ENCODE measurements at regions of chr6 and their contacts with region 1.

Region 1: GRCh38 chr6:39302669-39303424 is 11.4 kb downstream of the KCNK17 start:
- DNase-seq: peak; percentile 74 to 89 (median 83)
- ATAC-seq: peak; percentile 98
- H3K4me3 ChIP-seq: peak overlapping the region; percentile 26
- H3K4me3 Mint-ChIP-seq: peak overlapping the region; percentile 35
- H3K27ac ChIP-seq: no peak overlapping the region
- H3K27ac Mint-ChIP-seq: no peak overlapping the region
- H3K4me1 ChIP-seq: peaks cover 9% of the 10 kb centered on the region
- H3K4me1 Mint-ChIP-seq: peaks cover 4% of the 10 kb centered on the region
- H3K27me3 ChIP-seq: no peaks in the 10 kb centered on the region
- H3K27me3 Mint-ChIP-seq: no peaks in the 10 kb centered on the region
- CTCF ChIP-seq: peak; percentile 91

Region 2: GRCh38 chr6:38871741-38872568 is 430.9 kb before region 1 on chr6:
- CTCF ChIA-PET with region 1: interaction called, 4 read pairs
- POLR2A ChIA-PET with region 1: interaction called, 6 read pairs
- intact Hi-C with region 1: loop called (anchors 1 kb)
- DNase-seq: peak; percentile 20 to 74 (median 50)
- ATAC-seq: peak; percentile 53
- H3K4me3 ChIP-seq: no peak overlapping the region
- H3K4me3 Mint-ChIP-seq: no peak overlapping the region
- H3K27ac ChIP-seq: no peak overlapping the region
- H3K27ac Mint-ChIP-seq: no peak overlapping the region
- H3K4me1 ChIP-seq: peaks cover 14% of the 10 kb centered on the region
- H3K4me1 Mint-ChIP-seq: peaks cover 44% of the 10 kb centered on the region
- H3K27me3 ChIP-seq: no peaks in the 10 kb centered on the region
- H3K27me3 Mint-ChIP-seq: no peaks in the 10 kb centered on the region
- CTCF ChIP-seq: peak; percentile 86

Region 3: DNA sequence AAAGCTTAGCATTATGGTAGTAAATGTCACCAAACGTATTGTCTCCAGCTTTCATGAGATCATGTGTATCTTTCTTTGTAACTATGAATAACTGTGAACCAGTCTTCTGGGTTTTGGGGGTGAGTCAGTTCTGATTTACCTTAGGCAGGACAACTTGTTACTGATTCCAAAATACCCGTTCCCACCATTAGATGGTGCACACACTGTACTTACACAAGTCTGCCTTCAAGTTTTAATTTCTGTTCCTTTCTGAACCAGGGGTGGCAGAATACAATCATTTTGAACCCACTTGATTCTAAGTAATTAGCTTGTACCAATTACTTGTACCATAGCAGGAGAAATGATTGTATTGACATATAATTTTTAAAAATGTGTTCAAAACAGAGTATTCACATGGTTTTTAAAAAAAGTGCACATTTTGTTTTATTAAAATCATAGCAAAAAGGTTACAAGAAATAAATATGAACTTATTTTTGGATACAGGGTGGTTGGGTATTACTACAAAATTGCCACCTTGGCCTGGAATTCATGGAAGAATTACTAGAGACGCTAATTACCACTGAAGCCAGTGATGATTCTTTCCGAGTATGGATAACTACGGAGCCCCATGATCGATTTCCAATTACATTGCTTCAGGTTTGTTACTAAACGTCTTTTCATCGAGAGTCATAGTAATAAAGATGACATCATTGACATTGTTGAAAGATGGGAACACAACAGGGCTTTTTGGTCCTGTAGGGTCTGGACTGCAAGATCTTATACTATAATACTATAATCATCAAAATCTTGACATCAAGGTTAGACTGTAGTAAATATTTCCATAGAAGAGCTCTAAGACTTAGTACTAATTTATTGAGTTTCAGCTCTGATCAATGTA is 329.4 kb before region 1 on chr6:
- CTCF ChIA-PET with region 1: interaction called, 8 read pairs
- POLR2A ChIA-PET with region 1: no interaction called
- intact Hi-C with region 1: loop called (anchors 1 to 2 kb)
- DNase-seq: peak in 4 of 14 experiments; percentile 4 to 60 (median 49)
- ATAC-seq: peak; percentile 68
- H3K4me3 ChIP-seq: no peak overlapping the region
- H3K4me3 Mint-ChIP-seq: no peak overlapping the region
- H3K27ac ChIP-seq: no peak overlapping the region
- H3K27ac Mint-ChIP-seq: no peak overlapping the region
- H3K4me1 ChIP-seq: no peaks in the 10 kb centered on the region
- H3K4me1 Mint-ChIP-seq: no peaks in the 10 kb centered on the region
- H3K27me3 ChIP-seq: no peaks in the 10 kb centered on the region
- H3K27me3 Mint-ChIP-seq: peaks cover 27% of the 10 kb centered on the region
- CTCF ChIP-seq: peak; percentile 54

Region 4: GRCh38 chr6:38997128-38997761 is 305.6 kb before region 1 on chr6:
- CTCF ChIA-PET with region 1: interaction called, 5 read pairs
- POLR2A ChIA-PET with region 1: no interaction called
- intact Hi-C with region 1: loop called (anchors 2 to 5 kb)
- DNase-seq: peak in 11 of 14 experiments; percentile 4 to 41 (median 12)
- ATAC-seq: no peak
- H3K4me3 ChIP-seq: no peak overlapping the region
- H3K4me3 Mint-ChIP-seq: no peak overlapping the region
- H3K27ac ChIP-seq: no peak overlapping the region
- H3K27ac Mint-ChIP-seq: no peak overlapping the region
- H3K4me1 ChIP-seq: no peaks in the 10 kb centered on the region
- H3K4me1 Mint-ChIP-seq: no peaks in the 10 kb centered on the region
- H3K27me3 ChIP-seq: peaks cover 0 to 23% of the 10 kb centered on the region in 2 experiments
- H3K27me3 Mint-ChIP-seq: peaks cover 51% of the 10 kb centered on the region
- CTCF ChIP-seq: peak; percentile 38

Region 5: DNA sequence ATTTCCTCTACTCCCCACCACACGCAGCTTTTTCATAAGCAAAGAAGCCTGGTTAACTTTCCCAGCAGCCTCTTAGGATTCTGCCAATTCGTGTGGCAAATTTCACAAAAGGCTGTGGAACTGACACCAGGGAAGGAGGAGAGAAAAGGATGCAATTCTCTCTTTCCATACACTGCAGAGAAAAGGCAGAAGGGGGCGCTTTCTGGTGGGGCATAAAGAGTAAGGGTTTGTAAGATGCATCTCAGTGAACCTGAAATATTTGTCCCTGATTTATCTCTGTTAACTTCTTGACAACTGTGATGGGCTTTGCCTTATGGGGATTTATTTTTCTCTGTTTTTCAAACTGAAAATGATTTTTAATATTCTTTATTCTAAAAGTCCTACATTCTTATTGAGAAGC is 299.8 kb before region 1 on chr6:
- CTCF ChIA-PET with region 1: no interaction called
- POLR2A ChIA-PET with region 1: no interaction called
- intact Hi-C with region 1: loop called (anchors 2 to 5 kb)
- DNase-seq: peak in 2 of 14 experiments; percentile 1 to 5
- ATAC-seq: no peak
- H3K4me3 ChIP-seq: no peak overlapping the region
- H3K4me3 Mint-ChIP-seq: no peak overlapping the region
- H3K27ac ChIP-seq: no peak overlapping the region
- H3K27ac Mint-ChIP-seq: no peak overlapping the region
- H3K4me1 ChIP-seq: no peaks in the 10 kb centered on the region
- H3K4me1 Mint-ChIP-seq: no peaks in the 10 kb centered on the region
- H3K27me3 ChIP-seq: peaks cover 4 to 33% of the 10 kb centered on the region in 2 experiments
- H3K27me3 Mint-ChIP-seq: peaks cover 46% of the 10 kb centered on the region
- CTCF ChIP-seq: no peak

Region 6: GRCh38 chr6:39092124-39092523 is 210.7 kb before region 1 on chr6:
- CTCF ChIA-PET with region 1: interaction called, 8 read pairs
- POLR2A ChIA-PET with region 1: no interaction called
- intact Hi-C with region 1: loop called in 1 of 2 experiments (anchors 10 kb)
- DNase-seq: no peak
- ATAC-seq: no peak
- H3K4me3 ChIP-seq: no peak overlapping the region
- H3K4me3 Mint-ChIP-seq: no peak overlapping the region
- H3K27ac ChIP-seq: no peak overlapping the region
- H3K27ac Mint-ChIP-seq: no peak overlapping the region
- H3K4me1 ChIP-seq: no peaks in the 10 kb centered on the region
- H3K4me1 Mint-ChIP-seq: no peaks in the 10 kb centered on the region
- H3K27me3 ChIP-seq: peaks cover 23 to 28% of the 10 kb centered on the region in 2 experiments
- H3K27me3 Mint-ChIP-seq: peaks cover 35% of the 10 kb centered on the region
- CTCF ChIP-seq: no peak

Region 7: DNA sequence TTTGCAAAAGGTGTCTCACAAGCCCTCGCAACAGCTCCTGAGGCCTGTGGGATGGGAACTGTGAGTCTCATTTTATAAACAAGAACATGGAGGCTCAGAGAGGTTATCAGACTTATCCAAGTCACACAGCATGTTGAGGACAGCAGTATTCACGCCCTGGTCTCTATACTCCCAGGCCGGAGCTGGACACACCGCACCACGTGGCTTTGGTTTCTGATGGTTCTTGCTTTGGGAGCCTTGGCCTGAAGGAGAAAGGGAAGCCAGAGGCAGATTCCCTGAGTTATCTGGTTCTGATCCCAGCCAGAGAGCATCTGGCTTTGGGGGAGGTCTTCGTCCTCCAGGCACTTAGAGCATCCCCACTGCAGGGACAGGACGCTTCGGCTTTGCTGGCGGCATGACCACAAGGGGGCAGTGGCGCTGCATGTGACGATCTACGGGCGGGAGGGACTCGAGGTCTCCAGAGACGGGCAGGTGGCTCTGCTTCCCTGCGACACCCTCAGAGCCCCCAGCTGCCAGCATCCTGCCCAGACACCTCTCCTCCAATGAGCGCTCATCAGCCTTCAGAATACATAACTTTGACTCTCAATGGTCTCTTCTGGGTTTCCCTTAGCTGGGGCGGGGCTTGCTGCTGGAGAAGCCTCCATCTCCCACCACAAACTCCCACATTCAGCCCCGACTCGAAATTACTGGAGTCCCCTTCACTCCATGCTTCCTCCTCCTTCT is 136.5 kb before region 1 on chr6:
- CTCF ChIA-PET with region 1: interaction called, 21 read pairs
- POLR2A ChIA-PET with region 1: interaction called, 4 read pairs
- intact Hi-C with region 1: loop called (anchors 1 kb)
- DNase-seq: peak; percentile 66 to 87 (median 78)
- ATAC-seq: peak; percentile 78
- H3K4me3 ChIP-seq: no peak overlapping the region
- H3K4me3 Mint-ChIP-seq: no peak overlapping the region
- H3K27ac ChIP-seq: no peak overlapping the region
- H3K27ac Mint-ChIP-seq: no peak overlapping the region
- H3K4me1 ChIP-seq: peaks cover 7% of the 10 kb centered on the region
- H3K4me1 Mint-ChIP-seq: no peaks in the 10 kb centered on the region
- H3K27me3 ChIP-seq: no peaks in the 10 kb centered on the region
- H3K27me3 Mint-ChIP-seq: no peaks in the 10 kb centered on the region
- CTCF ChIP-seq: peak; percentile 86

Region 8: GRCh38 chr6:39251406-39251805 is 51.4 kb before region 1 on chr6:
- CTCF ChIA-PET with region 1: no interaction called
- POLR2A ChIA-PET with region 1: no interaction called
- intact Hi-C with region 1: no loop called
- DNase-seq: no peak
- ATAC-seq: no peak
- H3K4me3 ChIP-seq: no peak overlapping the region
- H3K4me3 Mint-ChIP-seq: no peak overlapping the region
- H3K27ac ChIP-seq: no peak overlapping the region
- H3K27ac Mint-ChIP-seq: no peak overlapping the region
- H3K4me1 ChIP-seq: no peaks in the 10 kb centered on the region
- H3K4me1 Mint-ChIP-seq: no peaks in the 10 kb centered on the region
- H3K27me3 ChIP-seq: no peaks in the 10 kb centered on the region
- H3K27me3 Mint-ChIP-seq: no peaks in the 10 kb centered on the region
- CTCF ChIP-seq: no peak

Region 9: GRCh38 chr6:39330057-39330456 is 27.2 kb after region 1 on chr6:
- CTCF ChIA-PET with region 1: no interaction called
- POLR2A ChIA-PET with region 1: no interaction called
- intact Hi-C with region 1: no loop called
- DNase-seq: peak in 3 of 14 experiments; percentile 18 to 54 (median 52)
- ATAC-seq: no peak
- H3K4me3 ChIP-seq: no peak overlapping the region
- H3K4me3 Mint-ChIP-seq: no peak overlapping the region
- H3K27ac ChIP-seq: no peak overlapping the region
- H3K27ac Mint-ChIP-seq: no peak overlapping the region
- H3K4me1 ChIP-seq: no peaks in the 10 kb centered on the region
- H3K4me1 Mint-ChIP-seq: no peaks in the 10 kb centered on the region
- H3K27me3 ChIP-seq: no peaks in the 10 kb centered on the region
- H3K27me3 Mint-ChIP-seq: peaks cover 19% of the 10 kb centered on the region
- CTCF ChIP-seq: no peak